Heart left ventricle (tissue), 16 donors: ENCODE measurements at regions of chr12 and their contacts with region 1.

Region 1: DNA sequence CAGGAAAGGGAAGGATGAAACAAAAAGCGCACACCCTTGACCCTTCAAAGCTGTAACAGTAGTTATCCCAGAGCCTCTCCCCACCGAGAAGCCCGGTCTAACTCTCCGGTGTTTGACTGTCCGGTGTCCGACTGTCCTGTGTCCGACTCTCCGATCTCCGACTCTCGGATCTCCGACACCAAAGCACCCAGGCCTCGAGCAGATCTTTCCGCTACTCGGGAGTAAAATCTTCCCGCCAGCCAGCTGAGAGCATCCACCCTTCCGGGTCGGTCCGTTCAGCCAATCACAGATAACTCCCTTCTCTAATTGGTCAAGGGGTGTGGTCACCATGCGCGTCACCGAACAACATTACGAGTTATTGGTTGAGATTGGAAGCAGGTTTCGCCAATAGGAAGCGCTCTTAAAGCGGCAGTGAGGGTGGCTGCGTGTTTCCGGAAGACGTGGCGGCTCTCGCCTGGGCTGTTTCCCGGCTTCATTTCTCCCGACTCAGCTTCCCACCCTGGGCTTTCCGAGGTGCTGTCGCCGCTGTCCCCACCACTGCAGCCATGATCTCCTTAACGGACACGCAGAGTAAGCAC is at the starts of genes GOLT1B and RECQL:
- DNase-seq: peak; percentile 88 to 95 (median 93)
- ATAC-seq: peak; percentile 99 to 100 (median 99)
- H3K4me3 ChIP-seq: peak within 1 kb of the TSS; percentile 77 to 97 (median 90)
- H3K27ac ChIP-seq: peak within 1 kb of the TSS; percentile 39 to 91 (median 88)
- H3K4me1 ChIP-seq: peaks cover 8 to 57% (median 44%) of the 10 kb centered on the region in 12 donors
- H3K27me3 ChIP-seq: no peaks in the 10 kb centered on the region
- CTCF ChIP-seq: no peak
- POLR2A ChIP-seq: peak in 1 of 2 donors; percentile 72
- total RNA-seq, gene GOLT1B: 12.9 to 32.0 (median 22.1) TPM
- total RNA-seq, gene RECQL: 17.1 to 39.3 (median 27.4) TPM

Region 2: DNA sequence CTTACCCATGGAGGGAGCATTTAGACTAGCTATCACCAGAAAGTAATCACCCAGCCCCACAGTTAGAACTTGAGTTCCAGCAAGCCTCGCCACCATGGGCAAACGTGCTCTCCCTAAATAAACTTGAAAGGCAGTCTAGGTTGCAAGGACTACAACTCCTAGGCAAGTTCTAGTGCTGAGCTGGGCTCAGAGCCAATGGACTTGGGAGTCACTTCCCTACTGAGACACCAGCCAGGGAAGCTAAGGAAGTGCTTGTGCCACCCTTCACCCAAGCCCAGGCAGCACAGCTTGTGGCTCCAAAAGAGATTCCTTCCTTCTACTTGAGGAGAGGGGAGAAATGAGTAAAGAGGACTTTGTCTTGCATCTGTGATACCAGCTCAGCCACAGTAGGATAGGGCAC is 224.6 kb before region 1 on chr12:
- intact Hi-C with region 1: no loop called
- DNase-seq: no peak
- ATAC-seq: no peak
- H3K4me3 ChIP-seq: no peak overlapping the region
- H3K27ac ChIP-seq: no peak overlapping the region
- H3K4me1 ChIP-seq: no peaks in the 10 kb centered on the region
- H3K27me3 ChIP-seq: peaks cover 0 to 3% (median 0%) of the 10 kb centered on the region in 9 donors
- CTCF ChIP-seq: no peak
- POLR2A ChIP-seq: no peak

Region 3: GRCh38 chr12:21438643-21439042 is 62.8 kb before region 1 on chr12:
- intact Hi-C with region 1: loop called in 3 of 10 experiments (anchors 5 kb)
- DNase-seq: no peak
- ATAC-seq: no peak
- H3K4me3 ChIP-seq: peak overlapping the region in 9 of 12 donors; percentile 61 to 92 (median 84)
- H3K27ac ChIP-seq: peak overlapping the region in 4 of 12 donors; percentile 86 to 92 (median 88)
- H3K4me1 ChIP-seq: peaks cover 0 to 20% (median 7%) of the 10 kb centered on the region in 12 donors
- H3K27me3 ChIP-seq: no peaks in the 10 kb centered on the region
- CTCF ChIP-seq: no peak
- POLR2A ChIP-seq: no peak

Region 4: GRCh38 chr12:21657326-21658077 is 156.0 kb after region 1 on chr12 and contains the start of gene LDHB:
- intact Hi-C with region 1: loop called in 4 of 10 experiments (anchors 5 to 10 kb)
- DNase-seq: peak; percentile 96 to 99 (median 97)
- ATAC-seq: peak; percentile 99 to 100 (median 99)
- H3K4me3 ChIP-seq: peak within 1 kb of the TSS; percentile 56 to 95 (median 82)
- H3K27ac ChIP-seq: peak within 1 kb of the TSS; percentile 52 to 99 (median 94)
- H3K4me1 ChIP-seq: peaks cover 0 to 44% (median 23%) of the 10 kb centered on the region in 12 donors
- H3K27me3 ChIP-seq: no peaks in the 10 kb centered on the region
- CTCF ChIP-seq: no peak
- POLR2A ChIP-seq: peak; percentile 78 to 96
- total RNA-seq, gene LDHB: 1,099 to 3,071 (median 2,267) TPM

Region 5: DNA sequence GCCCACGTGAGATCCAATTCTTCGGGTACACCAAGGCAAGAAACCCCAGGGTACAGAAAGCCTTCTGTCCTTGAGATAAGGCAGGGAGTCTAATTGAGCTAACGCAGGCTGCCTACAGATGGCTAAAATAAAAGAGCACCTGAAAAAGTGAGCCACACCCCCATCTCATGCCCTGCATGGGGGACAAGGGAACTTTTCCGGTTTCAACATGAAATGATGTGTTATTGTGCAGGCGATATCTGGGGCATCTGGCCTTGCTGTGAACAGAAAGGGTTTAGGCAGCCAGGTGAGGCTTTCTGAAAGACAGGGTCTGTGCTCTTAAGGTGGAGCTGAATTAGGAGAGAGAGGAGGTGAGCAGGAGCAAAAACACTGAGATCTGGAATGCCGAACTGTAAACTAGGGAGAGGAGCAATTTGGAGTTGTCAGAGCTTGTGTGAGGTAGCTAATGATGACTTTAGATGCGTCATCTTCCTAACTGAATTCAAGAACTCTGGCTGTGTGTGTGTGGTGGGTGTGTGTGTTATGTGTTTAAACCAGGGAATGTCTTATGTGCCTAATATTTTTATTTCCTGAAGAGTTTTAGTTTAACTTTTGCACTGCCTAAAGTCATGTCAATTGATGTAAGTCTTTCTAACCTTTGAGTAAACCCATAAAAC is 176.3 kb after region 1 on chr12:
- intact Hi-C with region 1: loop called in 6 of 10 experiments (anchors 5 to 10 kb)
- DNase-seq: no peak
- ATAC-seq: no peak
- H3K4me3 ChIP-seq: no peak overlapping the region
- H3K27ac ChIP-seq: no peak overlapping the region
- H3K4me1 ChIP-seq: peaks cover 0 to 11% (median 0%) of the 10 kb centered on the region in 12 donors
- H3K27me3 ChIP-seq: no peaks in the 10 kb centered on the region
- CTCF ChIP-seq: no peak
- POLR2A ChIP-seq: no peak

Region 6: GRCh38 chr12:21683115-21683514 is 181.6 kb after region 1 on chr12:
- intact Hi-C with region 1: loop called in 6 of 10 experiments (anchors 5 to 10 kb)
- DNase-seq: no peak
- ATAC-seq: peak in 3 of 4 donors; percentile 50 to 81 (median 65)
- H3K4me3 ChIP-seq: no peak overlapping the region
- H3K27ac ChIP-seq: peak overlapping the region in 6 of 12 donors; percentile 17 to 53 (median 38)
- H3K4me1 ChIP-seq: peaks cover 0 to 16% (median 0%) of the 10 kb centered on the region in 12 donors
- H3K27me3 ChIP-seq: peaks cover 0 to 2% (median 0%) of the 10 kb centered on the region in 9 donors
- CTCF ChIP-seq: no peak
- POLR2A ChIP-seq: no peak